Dorsolateral prefrontal cortex (tissue), 120 donors: ENCODE measurements at regions of chr1 and their contacts with region 1.

Region 1: GRCh38 chr1:228139944-228140656 is at the start of gene GUK1:
- DNase-seq: peak; percentile 97 to 100 (median 99)
- H3K4me3 ChIP-seq: peak within 1 kb of the TSS; percentile 61 to 100 (median 95)
- H3K27ac ChIP-seq: peak within 1 kb of the TSS; percentile 58 to 100 (median 97)
- H3K27me3 ChIP-seq: no peaks in the 10 kb centered on the region
- CTCF ChIP-seq: peak in 52 of 56 donors; percentile 15 to 79 (median 49)
- total RNA-seq, gene GUK1: 226 to 417 (median 315) TPM

Region 2: GRCh38 chr1:227913764-227914721 is 226.1 kb before region 1 on chr1:
- intact Hi-C with region 1: no loop called
- DNase-seq: no peak
- H3K4me3 ChIP-seq: no peak overlapping the region
- H3K27ac ChIP-seq: no peak overlapping the region
- H3K27me3 ChIP-seq: no peaks in the 10 kb centered on the region
- CTCF ChIP-seq: no peak

Region 3: GRCh38 chr1:228062781-228063171 is 77.3 kb before region 1 on chr1:
- intact Hi-C with region 1: no loop called
- DNase-seq: peak in 1 of 10 donors; percentile 16
- H3K4me3 ChIP-seq: no peak overlapping the region
- H3K27ac ChIP-seq: no peak overlapping the region
- H3K27me3 ChIP-seq: peaks cover 3 to 97% (median 86%) of the 10 kb centered on the region in 45 donors
- CTCF ChIP-seq: no peak

Region 4: GRCh38 chr1:228082135-228082891 is 57.8 kb before region 1 on chr1 and contains the start of gene ARF1:
- intact Hi-C with region 1: loop called in 1 of 2 experiments (anchors 2 kb)
- DNase-seq: peak; percentile 79 to 95 (median 90)
- H3K4me3 ChIP-seq: peak within 1 kb of the TSS; percentile 64 to 100 (median 99)
- H3K27ac ChIP-seq: peak within 1 kb of the TSS; percentile 66 to 99 (median 96)
- H3K27me3 ChIP-seq: no peaks in the 10 kb centered on the region
- CTCF ChIP-seq: peak in 49 of 56 donors; percentile 10 to 71 (median 47)
- total RNA-seq, gene ARF1: 206 to 403 (median 322) TPM

Region 5: DNA sequence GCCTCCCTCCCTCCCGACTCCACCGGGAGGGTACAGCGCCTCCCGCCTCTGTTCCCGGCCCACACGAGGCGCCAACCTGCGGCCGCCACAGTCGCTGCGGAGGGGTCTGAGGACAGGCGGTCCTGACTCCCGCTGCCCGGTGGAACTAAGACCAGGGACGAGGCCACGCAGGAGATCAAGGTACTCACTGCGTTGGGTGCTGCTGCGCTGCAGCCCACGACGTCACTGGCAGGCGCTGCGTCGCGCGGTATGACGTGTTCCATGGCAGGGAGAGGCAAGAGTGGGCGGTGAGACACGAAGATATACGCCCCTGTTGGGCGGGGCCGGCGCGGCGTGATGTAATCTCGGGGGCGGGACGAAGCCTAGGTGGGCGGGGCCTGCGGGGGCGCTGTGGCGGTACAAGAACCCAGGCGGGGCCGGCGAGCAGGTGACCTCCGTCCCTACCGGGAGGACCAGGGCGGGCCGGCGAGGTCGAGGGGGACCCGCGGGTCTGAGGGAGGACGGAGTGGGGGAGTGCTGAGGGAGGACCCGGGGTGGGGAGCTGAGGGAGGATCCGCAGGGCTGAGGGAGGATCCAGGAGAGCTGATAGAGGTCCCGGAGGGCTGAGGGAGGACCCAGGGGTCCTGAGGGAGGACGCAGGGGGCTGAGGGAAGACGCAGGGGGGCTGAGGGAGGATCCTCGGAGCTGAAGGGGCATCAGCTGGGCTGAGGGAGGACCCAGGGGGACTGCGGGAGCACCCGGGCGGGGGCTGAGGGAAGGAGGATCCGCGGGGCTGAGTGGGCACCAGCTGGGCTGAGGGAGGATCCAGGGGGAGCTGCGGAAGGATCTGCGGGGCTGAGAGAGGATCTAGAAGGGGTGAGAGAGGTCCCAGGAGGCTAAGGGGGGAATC is 30.8 kb before region 1 on chr1 and contains the start of gene MRPL55:
- intact Hi-C with region 1: loop called (anchors 1 to 2 kb)
- DNase-seq: peak; percentile 99 to 100 (median 100)
- H3K4me3 ChIP-seq: peak within 1 kb of the TSS; percentile 71 to 100 (median 98)
- H3K27ac ChIP-seq: peak within 1 kb of the TSS; percentile 58 to 98 (median 88)
- H3K27me3 ChIP-seq: no peaks in the 10 kb centered on the region
- CTCF ChIP-seq: peak in 45 of 56 donors; percentile 13 to 65 (median 34)
- total RNA-seq, gene MRPL55: 31.4 to 79.7 (median 54.4) TPM

Region 6: DNA sequence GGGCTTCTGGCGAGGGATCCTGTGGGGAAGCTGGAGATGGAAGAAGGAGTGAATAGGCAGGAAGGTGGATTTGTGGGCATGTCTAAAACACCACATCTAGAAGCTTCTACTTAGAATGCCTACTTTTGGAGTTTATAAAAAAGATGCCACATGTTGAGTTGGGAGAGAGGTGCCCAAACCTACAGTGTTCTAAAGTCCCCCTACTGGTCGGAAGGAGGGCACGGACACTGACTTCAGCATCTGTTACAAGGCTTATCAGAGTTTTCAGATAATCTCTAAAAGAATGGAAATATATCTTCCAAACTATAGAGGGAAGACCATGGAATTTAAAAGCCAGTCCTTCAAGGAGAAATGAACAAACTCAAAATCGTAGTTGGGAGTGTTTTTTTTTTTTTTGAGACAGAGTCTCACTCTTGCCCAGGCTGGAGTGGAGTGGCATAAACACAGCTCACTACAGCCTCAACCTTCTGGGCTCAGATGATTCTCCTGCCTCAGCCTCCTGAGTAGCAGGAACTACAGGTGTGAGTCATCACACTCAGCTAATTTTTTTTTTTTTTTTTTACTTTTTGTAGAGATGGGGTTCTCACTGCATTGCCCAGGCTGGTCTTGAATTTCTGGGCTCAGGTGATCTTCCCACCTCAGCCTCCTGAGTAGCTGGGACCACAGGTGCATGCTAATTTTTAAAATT is 40.3 kb after region 1 on chr1:
- intact Hi-C with region 1: no loop called
- DNase-seq: no peak
- H3K4me3 ChIP-seq: no peak overlapping the region
- H3K27ac ChIP-seq: peak overlapping the region in 6 of 59 donors; percentile 52 to 76 (median 63)
- H3K27me3 ChIP-seq: no peaks in the 10 kb centered on the region
- CTCF ChIP-seq: peak in 9 of 56 donors; percentile 8 to 30 (median 20)

Region 7: GRCh38 chr1:228486596-228487335 is 346.7 kb after region 1 on chr1:
- intact Hi-C with region 1: loop called in 1 of 2 experiments (anchors 5 kb)
- DNase-seq: peak; percentile 56 to 87 (median 78)
- H3K4me3 ChIP-seq: peak overlapping the region; percentile 66 to 99 (median 89)
- H3K27ac ChIP-seq: peak overlapping the region; percentile 97 to 100 (median 100)
- H3K27me3 ChIP-seq: no peaks in the 10 kb centered on the region
- CTCF ChIP-seq: peak in 6 of 56 donors; percentile 6 to 31 (median 16)